Naive thymus-derived CD4-positive, alpha-beta T cell (primary cell): ENCODE measurements at regions of chr19 and their contacts with region 1.

Region 1: DNA sequence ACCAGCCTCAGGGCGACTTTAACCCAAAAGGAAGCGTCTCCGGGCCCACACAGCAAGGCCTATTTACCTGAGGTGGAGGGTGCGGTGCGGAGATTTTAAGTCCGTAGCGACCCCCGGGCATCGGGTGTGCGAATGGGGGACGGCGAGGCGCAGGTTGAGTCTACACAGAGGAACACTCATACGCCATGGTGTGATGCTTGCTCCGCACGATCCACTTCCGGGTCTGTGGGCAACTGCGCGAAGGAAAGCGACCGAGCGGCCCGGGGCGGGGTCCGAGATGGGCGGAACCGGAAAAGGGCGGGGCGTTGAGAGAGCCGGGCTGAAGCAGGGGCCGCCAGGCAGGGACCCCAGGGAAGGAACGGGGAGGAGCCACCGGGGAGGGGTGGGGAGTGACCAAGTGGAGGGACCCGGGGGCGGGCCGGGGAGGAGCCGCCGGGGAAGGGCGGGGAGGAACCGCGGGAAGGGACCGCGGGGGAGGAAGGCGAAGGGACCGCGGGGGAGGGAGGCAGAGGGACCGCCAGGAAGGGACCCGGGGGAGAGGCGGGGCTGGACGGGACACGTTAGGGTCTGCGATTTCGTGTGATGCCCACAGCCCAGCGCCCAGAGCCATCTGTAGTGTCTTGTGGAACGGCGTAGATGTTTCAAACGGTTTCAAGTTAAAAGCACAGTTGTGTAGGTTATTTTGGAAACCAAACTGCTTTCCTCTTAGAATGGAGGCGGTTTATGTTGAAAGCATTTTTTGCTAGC is at the start of gene ZNF160:
- DNase-seq: peak; percentile 95 to 99 (median 97)
- ATAC-seq: peak; percentile 99
- H3K4me3 ChIP-seq: peak within 1 kb of the TSS; percentile 99
- H3K4me3 Mint-ChIP-seq: peak within 1 kb of the TSS; percentile 85 to 97 (median 88)
- H3K27ac ChIP-seq: peak within 1 kb of the TSS; percentile 89
- H3K27ac Mint-ChIP-seq: peak within 1 kb of the TSS; percentile 79 to 98 (median 94)
- H3K4me1 ChIP-seq: peaks cover 13 to 15% of the 10 kb centered on the region in 2 donors
- H3K4me1 Mint-ChIP-seq: peaks cover 22 to 37% (median 34%) of the 10 kb centered on the region in 7 donors
- H3K27me3 ChIP-seq: no peaks in the 10 kb centered on the region
- H3K27me3 Mint-ChIP-seq: no peaks in the 10 kb centered on the region
- total RNA-seq, gene ZNF160: 39.1 to 75.3 (median 52.9) TPM

Region 2: DNA sequence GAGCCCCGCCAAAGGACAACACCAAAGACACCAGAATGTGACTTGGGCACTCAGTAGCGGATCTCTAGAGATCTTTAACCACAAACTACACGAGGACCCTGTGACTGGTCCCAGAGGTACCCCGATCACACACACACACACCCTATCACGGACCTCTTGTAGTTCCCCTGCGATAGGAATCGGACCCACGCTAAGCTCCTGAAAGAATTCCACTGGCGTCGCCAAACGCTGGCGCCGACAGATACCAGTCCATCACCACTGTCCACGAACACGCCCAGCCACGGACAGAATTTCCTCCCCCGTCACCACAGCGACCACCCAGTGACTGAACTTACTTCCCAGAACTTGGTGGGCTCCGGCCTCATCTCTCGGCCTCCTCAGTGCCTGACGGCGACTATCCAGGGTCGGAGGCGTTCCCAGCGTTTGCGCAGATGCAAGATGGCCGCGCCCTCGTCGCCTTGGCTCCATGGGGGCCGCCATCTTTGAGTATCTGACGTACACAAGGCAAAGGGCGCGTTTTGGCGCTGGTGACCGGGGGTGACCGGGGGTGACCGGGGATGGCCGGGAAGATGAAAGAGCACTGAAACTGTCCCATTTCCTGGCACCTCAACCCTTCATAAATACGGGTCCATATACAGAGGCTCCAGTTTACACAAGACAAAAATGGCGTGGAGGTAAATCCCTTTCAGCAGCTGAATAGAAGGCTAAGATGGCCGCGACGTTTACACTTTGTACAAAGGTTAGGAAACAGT is 1095.4 kb before region 1 on chr19 and contains the start of gene ZNF615:
- CTCF ChIA-PET with region 1: no interaction called
- POLR2A ChIA-PET with region 1: no interaction called
- intact Hi-C with region 1: loop called in 1 of 2 experiments (anchors 2 kb)
- DNase-seq: peak; percentile 80 to 96 (median 85)
- ATAC-seq: peak; percentile 97
- H3K4me3 ChIP-seq: peak within 1 kb of the TSS; percentile 89
- H3K4me3 Mint-ChIP-seq: peak within 1 kb of the TSS; percentile 92 to 98 (median 98)
- H3K27ac ChIP-seq: peak within 1 kb of the TSS; percentile 83
- H3K27ac Mint-ChIP-seq: peak within 1 kb of the TSS; percentile 91 to 99 (median 95)
- H3K4me1 ChIP-seq: peaks cover 7% of the 10 kb centered on the region in 2 donors
- H3K4me1 Mint-ChIP-seq: peaks cover 15 to 33% (median 21%) of the 10 kb centered on the region in 7 donors
- H3K27me3 ChIP-seq: no peaks in the 10 kb centered on the region
- H3K27me3 Mint-ChIP-seq: no peaks in the 10 kb centered on the region
- total RNA-seq, gene ZNF615: 8.7 to 20.9 (median 11.0) TPM

Region 3: DNA sequence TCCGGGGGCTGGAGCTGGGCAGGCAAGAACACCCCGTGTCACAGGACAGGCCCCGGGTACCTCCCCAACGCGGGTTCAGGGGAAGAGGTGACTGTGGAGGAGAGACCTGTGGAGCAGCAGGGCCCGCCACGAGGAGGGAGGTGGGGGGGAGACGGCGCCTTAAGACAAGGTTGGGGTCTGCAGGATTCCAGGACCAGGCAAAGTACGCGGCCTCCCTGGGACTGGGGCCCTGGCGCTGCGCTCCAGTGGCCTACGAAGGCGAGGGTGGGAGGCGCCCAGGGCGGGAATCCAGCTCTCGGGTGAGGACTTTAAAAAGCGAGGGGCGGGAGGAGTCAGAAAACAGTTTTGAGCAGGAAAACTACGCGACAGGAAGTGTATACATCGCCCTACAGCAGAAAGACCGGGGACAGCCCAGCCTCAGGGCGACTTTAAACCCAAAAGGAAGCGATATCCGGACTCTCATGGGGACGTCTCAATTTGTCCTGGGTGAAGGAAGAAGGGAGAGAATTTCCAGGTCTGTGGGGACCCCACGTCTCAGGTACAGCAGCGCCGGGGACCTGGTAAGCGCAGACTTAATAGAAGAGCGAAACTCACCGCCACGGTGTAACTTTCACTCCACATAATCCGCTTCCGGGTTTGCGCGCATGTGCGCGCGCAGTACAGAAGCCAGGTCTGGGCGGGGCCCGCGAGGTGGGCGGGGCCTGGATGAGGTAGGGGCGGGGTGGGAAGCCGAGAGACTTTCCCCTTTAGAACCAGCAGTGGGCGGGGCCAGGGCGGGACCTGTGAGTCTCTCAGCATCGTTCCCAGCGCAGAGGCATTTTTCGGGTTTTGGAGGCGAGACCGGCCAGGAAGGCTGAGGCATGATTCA is 465.4 kb before region 1 on chr19 and contains the start of gene ZNF83:
- CTCF ChIA-PET with region 1: no interaction called
- POLR2A ChIA-PET with region 1: no interaction called
- intact Hi-C with region 1: loop called in 1 of 2 experiments (anchors 5 kb)
- DNase-seq: peak; percentile 81 to 97 (median 92)
- ATAC-seq: peak; percentile 99
- H3K4me3 ChIP-seq: peak within 1 kb of the TSS; percentile 86
- H3K4me3 Mint-ChIP-seq: peak within 1 kb of the TSS; percentile 92 to 98 (median 95)
- H3K27ac ChIP-seq: peak within 1 kb of the TSS; percentile 99
- H3K27ac Mint-ChIP-seq: peak within 1 kb of the TSS; percentile 94 to 98 (median 97)
- H3K4me1 ChIP-seq: peaks cover 7 to 8% of the 10 kb centered on the region in 2 donors
- H3K4me1 Mint-ChIP-seq: peaks cover 11 to 27% (median 20%) of the 10 kb centered on the region in 7 donors
- H3K27me3 ChIP-seq: no peaks in the 10 kb centered on the region
- H3K27me3 Mint-ChIP-seq: no peaks in the 10 kb centered on the region
- total RNA-seq, gene ZNF83: 49.7 to 113 (median 70.5) TPM

Region 4: GRCh38 chr19:52962394-52963246 is 140.8 kb before region 1 on chr19 and contains the start of gene ZNF816:
- CTCF ChIA-PET with region 1: no interaction called
- POLR2A ChIA-PET with region 1: no interaction called
- intact Hi-C with region 1: loop called (anchors 1 kb)
- DNase-seq: peak; percentile 94 to 99 (median 98)
- ATAC-seq: peak; percentile 100
- H3K4me3 ChIP-seq: peak within 1 kb of the TSS; percentile 77
- H3K4me3 Mint-ChIP-seq: peak within 1 kb of the TSS; percentile 87 to 96 (median 94)
- H3K27ac ChIP-seq: peak within 1 kb of the TSS; percentile 73
- H3K27ac Mint-ChIP-seq: peak within 1 kb of the TSS; percentile 82 to 95 (median 93)
- H3K4me1 ChIP-seq: peaks cover 12 to 14% of the 10 kb centered on the region in 2 donors
- H3K4me1 Mint-ChIP-seq: peaks cover 15 to 33% (median 29%) of the 10 kb centered on the region in 7 donors
- H3K27me3 ChIP-seq: no peaks in the 10 kb centered on the region
- H3K27me3 Mint-ChIP-seq: no peaks in the 10 kb centered on the region
- total RNA-seq, gene ZNF816: 5.0 to 25.7 (median 11.0) TPM

Region 5: GRCh38 chr19:53254411-53255341 is 151.3 kb after region 1 on chr19 and contains the start of gene ZNF677:
- CTCF ChIA-PET with region 1: no interaction called
- POLR2A ChIA-PET with region 1: interaction called, 3 read pairs
- intact Hi-C with region 1: loop called (anchors 1 kb)
- DNase-seq: peak; percentile 42 to 86 (median 77)
- ATAC-seq: peak; percentile 100
- H3K4me3 ChIP-seq: peak within 1 kb of the TSS; percentile 54
- H3K4me3 Mint-ChIP-seq: peak within 1 kb of the TSS; percentile 84 to 93 (median 89)
- H3K27ac ChIP-seq: peak within 1 kb of the TSS; percentile 66
- H3K27ac Mint-ChIP-seq: peak within 1 kb of the TSS in 8 of 9 donors; percentile 21 to 94 (median 78)
- H3K4me1 ChIP-seq: peaks cover 0 to 6% of the 10 kb centered on the region in 2 donors
- H3K4me1 Mint-ChIP-seq: peaks cover 0 to 17% (median 11%) of the 10 kb centered on the region in 7 donors
- H3K27me3 ChIP-seq: no peaks in the 10 kb centered on the region
- H3K27me3 Mint-ChIP-seq: peaks cover 0 to 13% (median 12%) of the 10 kb centered on the region in 5 donors
- total RNA-seq, gene ZNF677: 2.2 to 25.9 (median 7.4) TPM

Region 6: GRCh38 chr19:53467485-53468262 is 364.3 kb after region 1 on chr19 and contains the start of gene ZNF813:
- CTCF ChIA-PET with region 1: no interaction called
- POLR2A ChIA-PET with region 1: no interaction called
- intact Hi-C with region 1: loop called in 1 of 2 experiments (anchors 2 kb)
- DNase-seq: peak; percentile 81 to 95 (median 92)
- ATAC-seq: peak; percentile 100
- H3K4me3 ChIP-seq: peak within 1 kb of the TSS; percentile 74
- H3K4me3 Mint-ChIP-seq: peak within 1 kb of the TSS; percentile 88 to 96 (median 94)
- H3K27ac ChIP-seq: peak within 1 kb of the TSS; percentile 73
- H3K27ac Mint-ChIP-seq: peak within 1 kb of the TSS; percentile 76 to 96 (median 90)
- H3K4me1 ChIP-seq: no peaks in the 10 kb centered on the region
- H3K4me1 Mint-ChIP-seq: peaks cover 20 to 45% (median 31%) of the 10 kb centered on the region in 7 donors
- H3K27me3 ChIP-seq: no peaks in the 10 kb centered on the region
- H3K27me3 Mint-ChIP-seq: peaks cover 0 to 24% (median 12%) of the 10 kb centered on the region in 5 donors
- total RNA-seq, gene ZNF813: 2.5 to 11.2 (median 4.6) TPM

Region 7: GRCh38 chr19:53532362-53532761 is 429.0 kb after region 1 on chr19:
- CTCF ChIA-PET with region 1: no interaction called
- POLR2A ChIA-PET with region 1: no interaction called
- intact Hi-C with region 1: no loop called
- DNase-seq: no peak
- ATAC-seq: no peak
- H3K4me3 ChIP-seq: no peak overlapping the region
- H3K4me3 Mint-ChIP-seq: no peak overlapping the region
- H3K27ac ChIP-seq: no peak overlapping the region
- H3K27ac Mint-ChIP-seq: no peak overlapping the region
- H3K4me1 ChIP-seq: peaks cover 0 to 6% of the 10 kb centered on the region in 2 donors
- H3K4me1 Mint-ChIP-seq: peaks cover 0 to 4% (median 0%) of the 10 kb centered on the region in 7 donors
- H3K27me3 ChIP-seq: no peaks in the 10 kb centered on the region
- H3K27me3 Mint-ChIP-seq: no peaks in the 10 kb centered on the region